B cell (primary cell): ENCODE measurements at regions of chr15 and their contacts with region 1.

Region 1: GRCh38 chr15:75201609-75202250 is at the start of gene C15orf39:
- DNase-seq: peak; percentile 89
- ATAC-seq: peak; percentile 59
- H3K4me3 ChIP-seq: peak within 1 kb of the TSS; percentile 53 to 77 (median 73)
- H3K4me3 Mint-ChIP-seq: peak within 1 kb of the TSS; percentile 98
- H3K27ac ChIP-seq: peak within 1 kb of the TSS; percentile 59 to 86
- H3K27ac Mint-ChIP-seq: peak within 1 kb of the TSS; percentile 96
- H3K4me1 ChIP-seq: peaks cover 24 to 51% of the 10 kb centered on the region in 2 donors
- H3K4me1 Mint-ChIP-seq: peaks cover 41% of the 10 kb centered on the region
- H3K27me3 ChIP-seq: peaks cover 0 to 19% (median 5%) of the 10 kb centered on the region in 4 experiments
- H3K27me3 Mint-ChIP-seq: no peaks in the 10 kb centered on the region
- CTCF ChIP-seq: peak; percentile 97
- total RNA-seq, gene C15orf39: 72.1 and 72.7 TPM in 2 replicates

Region 2: GRCh38 chr15:74956648-74957300 is 245.0 kb before region 1 on chr15 and contains the start of gene RPP25:
- CTCF ChIA-PET with region 1: interaction called, 11 read pairs
- POLR2A ChIA-PET with region 1: no interaction called
- intact Hi-C with region 1: loop called (anchors 1 kb)
- DNase-seq: peak; percentile 84
- ATAC-seq: peak; percentile 91
- H3K4me3 ChIP-seq: peak within 1 kb of the TSS; percentile 39 to 80 (median 53)
- H3K4me3 Mint-ChIP-seq: peak within 1 kb of the TSS; percentile 85
- H3K27ac ChIP-seq: no peak within 1 kb of the TSS
- H3K27ac Mint-ChIP-seq: no peak within 1 kb of the TSS
- H3K4me1 ChIP-seq: peaks cover 38 to 40% of the 10 kb centered on the region in 2 donors
- H3K4me1 Mint-ChIP-seq: peaks cover 30% of the 10 kb centered on the region
- H3K27me3 ChIP-seq: peaks cover 0 to 64% (median 37%) of the 10 kb centered on the region in 4 experiments
- H3K27me3 Mint-ChIP-seq: peaks cover 43% of the 10 kb centered on the region
- CTCF ChIP-seq: no peak
- total RNA-seq, gene RPP25: 3.1 and 4.4 TPM in 2 replicates

Region 3: GRCh38 chr15:75029378-75030022 is 172.2 kb before region 1 on chr15:
- CTCF ChIA-PET with region 1: interaction called, 251 read pairs
- POLR2A ChIA-PET with region 1: interaction called, 3 read pairs
- intact Hi-C with region 1: loop called (anchors 1 kb)
- DNase-seq: peak; percentile 90
- ATAC-seq: peak; percentile 98
- H3K4me3 ChIP-seq: peak overlapping the region in 1 of 5 experiments; percentile 9
- H3K4me3 Mint-ChIP-seq: no peak overlapping the region
- H3K27ac ChIP-seq: no peak overlapping the region
- H3K27ac Mint-ChIP-seq: no peak overlapping the region
- H3K4me1 ChIP-seq: peaks cover 12 to 25% of the 10 kb centered on the region in 2 donors
- H3K4me1 Mint-ChIP-seq: peaks cover 17% of the 10 kb centered on the region
- H3K27me3 ChIP-seq: peaks cover 0 to 8% (median 0%) of the 10 kb centered on the region in 4 experiments
- H3K27me3 Mint-ChIP-seq: no peaks in the 10 kb centered on the region
- CTCF ChIP-seq: peak; percentile 91

Region 4: GRCh38 chr15:75104804-75105535 is 96.8 kb before region 1 on chr15:
- CTCF ChIA-PET with region 1: interaction called, 6 read pairs
- POLR2A ChIA-PET with region 1: interaction called, 9 read pairs
- intact Hi-C with region 1: loop called (anchors 10 kb)
- DNase-seq: peak; percentile 44
- ATAC-seq: peak; percentile 37
- H3K4me3 ChIP-seq: no peak overlapping the region
- H3K4me3 Mint-ChIP-seq: peak overlapping the region; percentile 66
- H3K27ac ChIP-seq: peak overlapping the region; percentile 5 to 10
- H3K27ac Mint-ChIP-seq: peak overlapping the region; percentile 92
- H3K4me1 ChIP-seq: peaks cover 37 to 45% of the 10 kb centered on the region in 2 donors
- H3K4me1 Mint-ChIP-seq: peaks cover 40% of the 10 kb centered on the region
- H3K27me3 ChIP-seq: peaks cover 0 to 11% (median 4%) of the 10 kb centered on the region in 4 experiments
- H3K27me3 Mint-ChIP-seq: peaks cover 23% of the 10 kb centered on the region
- CTCF ChIP-seq: no peak

Region 5: DNA sequence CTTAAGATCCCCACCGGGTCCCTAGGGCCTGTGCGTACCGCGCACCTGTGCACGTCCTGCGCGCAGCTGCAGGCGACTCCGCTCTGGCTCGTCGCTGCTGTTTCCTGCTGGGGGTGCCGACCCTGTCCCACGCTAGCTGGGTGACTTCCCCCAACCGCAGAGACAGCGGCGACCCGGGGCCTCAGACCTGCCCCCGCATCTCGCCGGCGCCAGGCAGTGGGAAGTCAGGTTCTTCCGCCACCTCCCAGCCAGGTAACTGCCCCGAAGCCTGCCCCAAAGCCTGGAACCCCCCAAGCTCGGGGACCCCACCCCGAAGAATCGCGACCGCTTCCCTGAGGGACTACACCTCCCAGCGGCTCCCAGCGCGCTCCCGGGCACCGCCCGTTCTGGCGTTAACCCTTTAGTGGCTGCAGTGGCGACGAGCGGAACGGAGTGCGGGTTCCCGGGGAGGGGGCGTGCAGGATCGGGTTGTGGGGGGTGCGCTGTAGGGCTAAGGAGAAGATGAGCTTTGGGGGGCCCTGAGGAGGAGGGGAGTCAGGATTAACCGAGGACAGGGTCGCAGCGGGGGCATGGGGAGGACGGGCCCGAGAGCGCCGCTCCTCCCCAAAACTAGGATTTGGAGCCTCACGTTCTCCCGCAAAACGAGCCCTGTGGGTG is 145.6 kb after region 1 on chr15:
- CTCF ChIA-PET with region 1: no interaction called
- POLR2A ChIA-PET with region 1: no interaction called
- intact Hi-C with region 1: loop called (anchors 1 kb)
- DNase-seq: peak; percentile 97
- ATAC-seq: peak; percentile 80
- H3K4me3 ChIP-seq: peak overlapping the region; percentile 3 to 82 (median 70)
- H3K4me3 Mint-ChIP-seq: peak overlapping the region; percentile 80
- H3K27ac ChIP-seq: peak overlapping the region; percentile 92 to 94
- H3K27ac Mint-ChIP-seq: peak overlapping the region; percentile 94
- H3K4me1 ChIP-seq: peaks cover 31 to 47% of the 10 kb centered on the region in 2 donors
- H3K4me1 Mint-ChIP-seq: peaks cover 45% of the 10 kb centered on the region
- H3K27me3 ChIP-seq: no peaks in the 10 kb centered on the region
- H3K27me3 Mint-ChIP-seq: no peaks in the 10 kb centered on the region
- CTCF ChIP-seq: no peak